ENCODE measurements at regions of chr16 and their contacts with region 1.

Region 1: GRCh38 chr16:74709441-74709877 is 8.8 kb upstream of the MLKL start:
- DNase-seq: peak; percentile 81 to 85
- ATAC-seq: peak; percentile 98
- H3K4me3 ChIP-seq: no peak overlapping the region
- H3K27ac ChIP-seq: peak overlapping the region; percentile 22 to 53; a peak in 4 of 6 replicates
- H3K4me1 ChIP-seq: peaks cover 7% of the 10 kb centered on the region; the same call in 2 of the 3 replicates
- CTCF ChIP-seq: peak; percentile 99
- EP300 ChIP-seq: no peak
- POLR2A ChIP-seq: no peak
- RAD21 ChIP-seq: peak; percentile 99

Region 2: GRCh38 chr16:74466872-74467271 is 242.6 kb before region 1 on chr16:
- CTCF ChIA-PET with region 1: no interaction called
- POLR2A ChIA-PET with region 1: no interaction called
- DNase-seq: no peak
- ATAC-seq: no peak
- H3K4me3 ChIP-seq: no peak overlapping the region
- H3K27ac ChIP-seq: no peak overlapping the region
- H3K4me1 ChIP-seq: no peaks in the 10 kb centered on the region
- CTCF ChIP-seq: no peak
- EP300 ChIP-seq: no peak
- POLR2A ChIP-seq: no peak
- RAD21 ChIP-seq: no peak

Region 3: GRCh38 chr16:74623214-74623842 is 86.1 kb before region 1 on chr16:
- CTCF ChIA-PET with region 1: no interaction called
- POLR2A ChIA-PET with region 1: no interaction called
- DNase-seq: peak; percentile 57 to 68
- ATAC-seq: peak; percentile 69 to 75; a peak in 5 of 6 replicates
- H3K4me3 ChIP-seq: no peak overlapping the region
- H3K27ac ChIP-seq: no peak overlapping the region
- H3K4me1 ChIP-seq: no peaks in the 10 kb centered on the region
- CTCF ChIP-seq: peak; percentile 79
- EP300 ChIP-seq: no peak
- POLR2A ChIP-seq: no peak
- RAD21 ChIP-seq: peak; percentile 61 to 72

Region 4: DNA sequence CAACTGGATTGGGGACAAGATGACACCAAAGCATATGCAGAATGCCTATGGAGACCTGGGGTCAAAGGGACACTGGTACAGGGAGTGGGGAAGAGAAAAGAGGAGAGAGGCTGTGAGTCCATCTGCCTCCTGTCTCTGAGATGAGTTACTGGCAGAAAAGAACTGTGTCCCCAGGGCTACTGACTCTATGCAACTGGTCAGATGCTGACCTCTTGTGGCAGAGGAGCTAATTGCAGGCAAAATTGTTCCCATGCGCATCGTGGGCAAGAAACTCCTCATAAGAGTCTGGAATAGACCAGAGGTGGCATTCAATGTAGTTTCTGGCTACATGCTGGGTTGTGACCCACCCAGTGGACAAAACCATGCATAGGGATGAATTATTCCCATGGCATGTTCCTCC is 17.3 kb after region 1 on chr16:
- CTCF ChIA-PET with region 1: interaction called, 68 read pairs
- POLR2A ChIA-PET with region 1: no interaction called
- DNase-seq: peak in 1 of 2 experiments; percentile 72
- ATAC-seq: peak in 1 of 2 experiments; percentile 65; a peak in 3 of 6 replicates
- H3K4me3 ChIP-seq: no peak overlapping the region
- H3K27ac ChIP-seq: no peak overlapping the region
- H3K4me1 ChIP-seq: peaks cover 16% of the 10 kb centered on the region
- CTCF ChIP-seq: peak; percentile 45
- EP300 ChIP-seq: no peak
- POLR2A ChIP-seq: no peak
- RAD21 ChIP-seq: peak in 1 of 2 experiments; percentile 53; a peak in 2 of 5 replicates

Region 5: GRCh38 chr16:74743668-74744299 is 34.3 kb after region 1 on chr16:
- CTCF ChIA-PET with region 1: interaction called, 55 read pairs
- POLR2A ChIA-PET with region 1: interaction called, 6 read pairs
- DNase-seq: peak; percentile 98 to 99
- ATAC-seq: peak; percentile 84 to 86
- H3K4me3 ChIP-seq: peak overlapping the region; percentile 23; the same call in 1 of the 3 replicates
- H3K27ac ChIP-seq: peak overlapping the region; percentile 91
- H3K4me1 ChIP-seq: peaks cover 66% of the 10 kb centered on the region
- CTCF ChIP-seq: no peak
- EP300 ChIP-seq: peak; percentile 37 to 63; a peak in 2 of 5 replicates
- POLR2A ChIP-seq: peak; percentile 6; the same call in 1 of the 2 replicates
- RAD21 ChIP-seq: 0 out of 5 replicates have a peak, but pooled peaks of 1 of the 2 experiments have one; percentile 15